Psoas muscle (tissue), 8 donors: ENCODE measurements at regions of chr5 and their contacts with region 1.

Region 1: DNA sequence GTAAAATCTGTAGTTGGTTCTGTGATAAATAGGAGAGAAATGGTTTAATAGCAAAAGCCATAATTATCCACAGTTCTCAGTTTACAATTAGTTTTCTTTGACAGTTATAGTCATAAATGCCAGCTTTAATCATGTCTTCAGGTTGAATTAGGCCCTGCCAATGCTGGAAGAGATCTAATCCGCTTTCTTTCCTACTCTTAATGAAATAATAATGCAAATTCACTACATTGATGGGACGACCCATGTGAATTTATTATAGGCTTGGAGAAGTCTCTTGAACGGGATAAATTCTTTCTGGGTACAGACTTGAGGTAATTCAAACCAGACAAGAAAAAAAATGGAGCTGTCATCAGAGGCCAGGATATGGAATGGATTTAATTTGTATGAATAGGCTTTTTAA is 950.4 kb downstream of the EFNA5 start:
- DNase-seq: no peak
- ATAC-seq: no peak
- H3K4me3 ChIP-seq: no peak overlapping the region
- H3K27ac ChIP-seq: no peak overlapping the region
- H3K4me1 ChIP-seq: no peaks in the 10 kb centered on the region
- H3K27me3 ChIP-seq: no peaks in the 10 kb centered on the region
- CTCF ChIP-seq: no peak

Region 2: DNA sequence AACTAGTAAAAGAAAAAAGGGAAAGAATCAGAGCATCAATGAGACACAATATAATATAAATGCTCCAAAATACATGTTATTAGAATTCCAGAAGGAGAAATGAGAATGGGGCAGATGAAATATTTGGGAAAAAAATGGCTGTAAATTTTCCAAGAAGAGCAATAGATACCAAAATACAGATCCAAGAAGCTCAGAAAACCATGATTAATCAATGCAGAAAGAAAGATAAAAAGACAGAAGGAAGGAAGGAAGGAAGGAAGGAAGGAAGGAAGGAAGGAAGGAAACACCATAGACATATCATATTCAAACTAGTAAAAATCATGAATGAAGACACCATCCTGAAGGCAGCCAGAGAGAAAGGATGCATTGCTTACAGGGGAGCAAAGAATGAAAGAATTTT is 29.5 kb after region 1 on chr5:
- intact Hi-C with region 1: loop called in 1 of 2 experiments (anchors 2 kb)
- DNase-seq: no peak
- ATAC-seq: no peak
- H3K4me3 ChIP-seq: no peak overlapping the region
- H3K27ac ChIP-seq: no peak overlapping the region
- H3K4me1 ChIP-seq: no peaks in the 10 kb centered on the region
- H3K27me3 ChIP-seq: no peaks in the 10 kb centered on the region
- CTCF ChIP-seq: no peak